GM12878 (cell line): ENCODE measurements at regions of chr10 and their contacts with region 1.

Region 1: GRCh38 chr10:110746254-110746826 is 102.2 kb downstream of the RBM20 start:
- DNase-seq: no peak
- ATAC-seq: peak; percentile 73
- H3K4me3 ChIP-seq: no peak overlapping the region
- H3K27ac ChIP-seq: peak overlapping the region; percentile 94; the same call in 1 of the 2 replicates
- H3K4me1 ChIP-seq: peaks cover 31% of the 10 kb centered on the region
- H3K27me3 ChIP-seq: no peaks in the 10 kb centered on the region
- CTCF ChIP-seq: peak; percentile 66 to 78 (median 76)
- EP300 ChIP-seq: no peak
- POLR2A ChIP-seq: no peak
- RAD21 ChIP-seq: peak; percentile 96

Region 2: GRCh38 chr10:110617425-110618229 is 128.7 kb before region 1 on chr10:
- CTCF ChIA-PET with region 1: interaction called, 3 read pairs
- POLR2A ChIA-PET with region 1: no interaction called
- RAD21 ChIA-PET with region 1: interaction called, 6 read pairs
- SMC1A ChIA-PET with region 1: interaction called, 28 read pairs
- in situ Hi-C with region 1: no loop called
- intact Hi-C with region 1: loop called (anchors 1 kb)
- DNase-seq: no peak
- ATAC-seq: no peak
- H3K4me3 ChIP-seq: no peak overlapping the region
- H3K27ac ChIP-seq: no peak overlapping the region
- H3K4me1 ChIP-seq: peaks cover 27% of the 10 kb centered on the region
- H3K27me3 ChIP-seq: no peaks in the 10 kb centered on the region
- CTCF ChIP-seq: no peak
- EP300 ChIP-seq: no peak
- POLR2A ChIP-seq: no peak
- RAD21 ChIP-seq: no peak

Region 3: GRCh38 chr10:110643653-110644597 is 102.4 kb before region 1 on chr10 and contains the start of gene RBM20:
- CTCF ChIA-PET with region 1: no interaction called
- POLR2A ChIA-PET with region 1: no interaction called
- RAD21 ChIA-PET with region 1: no interaction called
- SMC1A ChIA-PET with region 1: no interaction called
- in situ Hi-C with region 1: no loop called
- intact Hi-C with region 1: no loop called
- DNase-seq: no peak
- ATAC-seq: peak; percentile 70
- H3K4me3 ChIP-seq: peak within 1 kb of the TSS; percentile 58
- H3K27ac ChIP-seq: no peak within 1 kb of the TSS
- H3K4me1 ChIP-seq: peaks cover 4% of the 10 kb centered on the region; the same call in 1 of the 2 replicates
- H3K27me3 ChIP-seq: peaks cover 10 to 22% of the 10 kb centered on the region in 2 experiments
- CTCF ChIP-seq: no peak
- EP300 ChIP-seq: no peak
- POLR2A ChIP-seq: no peak
- RAD21 ChIP-seq: no peak
- polyA plus RNA-seq, gene RBM20: 0.04 to 0.05 TPM

Region 4: DNA sequence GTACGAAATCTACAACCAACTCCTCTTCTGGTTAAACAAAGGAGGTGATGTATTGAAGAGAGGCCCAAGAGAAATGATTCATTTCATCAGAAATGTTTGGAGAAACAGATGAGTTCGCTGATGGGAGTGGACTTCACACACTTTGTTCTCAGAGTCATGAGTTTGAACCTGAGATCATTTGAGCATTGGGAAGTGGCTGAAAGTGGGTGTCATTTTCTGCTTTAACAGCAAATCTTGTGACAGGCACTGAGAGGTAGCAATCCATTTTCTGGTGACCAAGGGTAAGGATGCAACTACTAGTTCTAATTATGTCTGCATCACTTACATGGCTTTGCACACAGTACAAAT is 50.8 kb before region 1 on chr10:
- CTCF ChIA-PET with region 1: no interaction called
- POLR2A ChIA-PET with region 1: no interaction called
- RAD21 ChIA-PET with region 1: no interaction called
- SMC1A ChIA-PET with region 1: no interaction called
- in situ Hi-C with region 1: no loop called
- intact Hi-C with region 1: no loop called
- DNase-seq: no peak
- ATAC-seq: no peak
- H3K4me3 ChIP-seq: no peak overlapping the region
- H3K27ac ChIP-seq: no peak overlapping the region
- H3K4me1 ChIP-seq: peaks cover 3% of the 10 kb centered on the region; the same call in 1 of the 2 replicates
- H3K27me3 ChIP-seq: peaks cover 0 to 5% of the 10 kb centered on the region in 2 experiments; a peak in 1 of 4 replicates
- CTCF ChIP-seq: no peak
- EP300 ChIP-seq: no peak
- POLR2A ChIP-seq: no peak
- RAD21 ChIP-seq: no peak

Region 5: DNA sequence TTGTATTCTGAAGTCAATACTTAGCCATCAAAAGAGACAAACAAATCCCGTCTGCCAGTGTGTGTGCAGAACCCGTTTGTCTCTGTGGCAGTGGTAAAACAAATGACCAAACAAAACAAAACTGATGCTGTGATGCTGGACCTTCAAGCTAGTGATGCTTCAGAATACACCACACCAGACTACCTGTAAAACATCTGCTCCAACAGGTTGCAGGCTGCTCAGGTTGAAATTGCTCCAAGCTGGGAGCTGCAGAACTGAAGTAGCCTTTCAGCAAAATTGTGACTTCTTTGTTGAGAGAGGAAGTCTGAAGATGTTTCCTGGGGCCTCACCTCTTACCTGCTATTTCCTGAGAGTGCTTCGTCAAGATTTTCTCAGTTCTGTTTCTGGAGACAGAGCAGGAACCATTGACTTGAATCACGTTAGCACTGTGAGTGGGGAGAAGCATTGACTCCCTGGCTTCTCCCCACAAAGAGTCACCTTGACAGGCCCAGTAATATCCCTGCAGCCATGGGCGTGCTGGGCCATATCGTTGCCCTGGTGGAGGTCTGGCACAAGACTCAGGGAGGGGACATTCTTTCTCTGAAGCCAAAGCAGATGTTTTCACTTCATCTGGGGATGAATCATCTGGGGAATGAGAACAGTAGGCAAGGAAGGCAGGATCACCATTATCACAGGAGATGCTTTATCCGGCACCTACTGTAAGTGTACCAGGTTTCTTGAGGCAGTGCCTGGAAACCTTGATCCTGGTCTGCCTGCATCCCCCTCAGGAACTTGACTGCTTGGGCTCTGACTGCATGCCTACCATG is 22.0 kb before region 1 on chr10:
- CTCF ChIA-PET with region 1: no interaction called
- POLR2A ChIA-PET with region 1: no interaction called
- RAD21 ChIA-PET with region 1: no interaction called
- SMC1A ChIA-PET with region 1: no interaction called
- in situ Hi-C with region 1: no loop called
- intact Hi-C with region 1: no loop called
- DNase-seq: no peak
- ATAC-seq: peak; percentile 70
- H3K4me3 ChIP-seq: no peak overlapping the region
- H3K27ac ChIP-seq: no peak overlapping the region
- H3K4me1 ChIP-seq: peaks cover 18% of the 10 kb centered on the region
- H3K27me3 ChIP-seq: no peaks in the 10 kb centered on the region
- CTCF ChIP-seq: no peak
- EP300 ChIP-seq: no peak
- POLR2A ChIP-seq: no peak
- RAD21 ChIP-seq: no peak

Region 6: GRCh38 chr10:110786172-110786571 is 39.8 kb after region 1 on chr10:
- CTCF ChIA-PET with region 1: interaction called, 4 read pairs
- POLR2A ChIA-PET with region 1: no interaction called
- RAD21 ChIA-PET with region 1: interaction called, 5 read pairs
- SMC1A ChIA-PET with region 1: interaction called, 4 read pairs
- in situ Hi-C with region 1: no loop called
- intact Hi-C with region 1: loop called (anchors 5 kb)
- DNase-seq: no peak
- ATAC-seq: peak; percentile 20; the same call in 2 of the 3 replicates
- H3K4me3 ChIP-seq: no peak overlapping the region
- H3K27ac ChIP-seq: no peak overlapping the region
- H3K4me1 ChIP-seq: 0 out of 2 replicates have a peak, but pooled peaks cover 4% of the 10 kb centered on the region
- H3K27me3 ChIP-seq: no peaks in the 10 kb centered on the region
- CTCF ChIP-seq: no peak
- EP300 ChIP-seq: no peak
- POLR2A ChIP-seq: no peak
- RAD21 ChIP-seq: no peak

Region 7: DNA sequence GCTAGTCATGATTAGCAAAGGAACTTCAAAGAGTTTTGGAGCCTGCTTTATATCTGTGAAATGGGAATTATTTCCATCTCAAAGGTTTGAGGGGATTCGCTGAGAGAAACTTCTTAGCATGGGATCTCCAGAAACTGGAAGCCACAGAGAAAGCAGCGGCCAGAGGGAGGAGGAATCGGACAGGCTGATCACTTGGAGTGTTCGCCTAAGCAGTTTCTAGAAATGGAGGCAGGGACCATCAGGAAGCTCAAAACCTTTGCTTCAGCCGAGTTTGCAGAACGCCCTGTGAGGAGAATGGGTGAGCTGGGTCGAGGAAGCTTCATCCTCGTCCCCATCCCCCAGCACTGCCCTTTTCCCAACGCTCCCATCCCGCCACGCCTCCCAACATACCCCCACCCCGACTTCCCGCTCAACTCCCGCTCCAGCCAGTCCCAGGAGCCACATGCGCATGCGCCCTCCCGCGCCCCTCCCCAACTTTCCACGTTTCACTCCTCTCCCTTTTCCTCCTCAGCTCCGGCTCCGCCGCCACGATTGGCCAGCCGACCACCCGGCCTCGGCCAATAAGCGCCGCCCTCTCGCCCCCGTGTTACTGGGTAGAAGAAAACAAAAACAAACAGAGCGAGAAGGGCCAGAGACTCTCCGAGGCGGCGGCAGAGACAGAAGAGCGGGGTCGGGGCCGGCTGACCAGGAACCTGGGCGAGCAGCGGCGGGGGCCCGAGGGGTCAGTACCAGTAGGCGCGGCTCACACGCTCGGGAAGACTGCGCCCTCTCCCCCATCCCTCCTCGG is 125.2 kb after region 1 on chr10 and contains the start of gene PDCD4:
- CTCF ChIA-PET with region 1: interaction called, 8 read pairs
- POLR2A ChIA-PET with region 1: no interaction called
- RAD21 ChIA-PET with region 1: interaction called, 5 read pairs
- SMC1A ChIA-PET with region 1: interaction called, 8 read pairs
- in situ Hi-C with region 1: loop called (anchors 5 kb)
- intact Hi-C with region 1: loop called (anchors 5 kb)
- DNase-seq: peak; percentile 86
- ATAC-seq: peak; percentile 78
- H3K4me3 ChIP-seq: peak within 1 kb of the TSS; percentile 65
- H3K27ac ChIP-seq: peak within 1 kb of the TSS; percentile 99
- H3K4me1 ChIP-seq: peaks cover 48% of the 10 kb centered on the region
- H3K27me3 ChIP-seq: no peaks in the 10 kb centered on the region
- CTCF ChIP-seq: no peak
- EP300 ChIP-seq: no peak
- POLR2A ChIP-seq: peak; percentile 96
- RAD21 ChIP-seq: no peak
- polyA plus RNA-seq, gene PDCD4: 101 to 138 TPM

Region 8: GRCh38 chr10:110918643-110919363 is 172.5 kb after region 1 on chr10 and contains the start of gene BBIP1:
- CTCF ChIA-PET with region 1: interaction called, 3 read pairs
- POLR2A ChIA-PET with region 1: interaction called, 3 read pairs
- RAD21 ChIA-PET with region 1: interaction called, 9 read pairs
- SMC1A ChIA-PET with region 1: interaction called, 13 read pairs
- in situ Hi-C with region 1: no loop called
- intact Hi-C with region 1: no loop called
- DNase-seq: peak; percentile 99
- ATAC-seq: peak; percentile 86
- H3K4me3 ChIP-seq: peak within 1 kb of the TSS; percentile 71
- H3K27ac ChIP-seq: peak within 1 kb of the TSS; percentile 96
- H3K4me1 ChIP-seq: peaks cover 7% of the 10 kb centered on the region; the same call in 1 of the 2 replicates
- H3K27me3 ChIP-seq: no peaks in the 10 kb centered on the region
- CTCF ChIP-seq: no peak
- EP300 ChIP-seq: no peak; a peak in 1 of 4 replicates
- POLR2A ChIP-seq: peak; percentile 92
- RAD21 ChIP-seq: no peak
- polyA plus RNA-seq, gene BBIP1: 34.7 to 40.8 TPM

Region 9: GRCh38 chr10:111207500-111207899 is 461.2 kb after region 1 on chr10:
- CTCF ChIA-PET with region 1: interaction called, 4 read pairs
- POLR2A ChIA-PET with region 1: no interaction called
- RAD21 ChIA-PET with region 1: interaction called, 4 read pairs
- SMC1A ChIA-PET with region 1: no interaction called
- in situ Hi-C with region 1: no loop called
- intact Hi-C with region 1: loop called (anchors 2 kb)
- DNase-seq: no peak
- ATAC-seq: peak; percentile 63
- H3K4me3 ChIP-seq: no peak overlapping the region
- H3K27ac ChIP-seq: no peak overlapping the region
- H3K4me1 ChIP-seq: no peaks in the 10 kb centered on the region
- H3K27me3 ChIP-seq: peaks cover 0 to 2% of the 10 kb centered on the region in 2 experiments; a peak in 1 of 4 replicates
- CTCF ChIP-seq: peak; percentile 32 to 40 (median 39); a peak in 4 of 6 replicates
- EP300 ChIP-seq: no peak
- POLR2A ChIP-seq: no peak
- RAD21 ChIP-seq: peak; percentile 64